CD4-positive, alpha-beta T cell (primary cell): ENCODE measurements at regions of chr14 and their contacts with region 1.

Region 1: GRCh38 chr14:102096214-102097114 is 9.6 kb upstream of the HSP90AA1 start:
- DNase-seq: peak; percentile 51 to 86 (median 66)
- ATAC-seq: peak; percentile 67
- H3K4me3 ChIP-seq: no peak overlapping the region
- H3K4me3 Mint-ChIP-seq: no peak overlapping the region
- H3K27ac ChIP-seq: no peak overlapping the region
- H3K27ac Mint-ChIP-seq: no peak overlapping the region
- H3K4me1 ChIP-seq: peaks cover 5% of the 10 kb centered on the region
- H3K4me1 Mint-ChIP-seq: no peaks in the 10 kb centered on the region
- H3K27me3 ChIP-seq: no peaks in the 10 kb centered on the region
- H3K27me3 Mint-ChIP-seq: no peaks in the 10 kb centered on the region
- CTCF ChIP-seq: peak; percentile 98

Region 2: GRCh38 chr14:101624536-101624935 is 471.9 kb before region 1 on chr14:
- CTCF ChIA-PET with region 1: no interaction called
- POLR2A ChIA-PET with region 1: no interaction called
- intact Hi-C with region 1: no loop called
- DNase-seq: peak in 1 of 14 experiments; percentile 7
- ATAC-seq: no peak
- H3K4me3 ChIP-seq: no peak overlapping the region
- H3K4me3 Mint-ChIP-seq: no peak overlapping the region
- H3K27ac ChIP-seq: no peak overlapping the region
- H3K27ac Mint-ChIP-seq: no peak overlapping the region
- H3K4me1 ChIP-seq: peaks cover 11% of the 10 kb centered on the region
- H3K4me1 Mint-ChIP-seq: peaks cover 9% of the 10 kb centered on the region
- H3K27me3 ChIP-seq: no peaks in the 10 kb centered on the region
- H3K27me3 Mint-ChIP-seq: no peaks in the 10 kb centered on the region
- CTCF ChIP-seq: no peak

Region 3: DNA sequence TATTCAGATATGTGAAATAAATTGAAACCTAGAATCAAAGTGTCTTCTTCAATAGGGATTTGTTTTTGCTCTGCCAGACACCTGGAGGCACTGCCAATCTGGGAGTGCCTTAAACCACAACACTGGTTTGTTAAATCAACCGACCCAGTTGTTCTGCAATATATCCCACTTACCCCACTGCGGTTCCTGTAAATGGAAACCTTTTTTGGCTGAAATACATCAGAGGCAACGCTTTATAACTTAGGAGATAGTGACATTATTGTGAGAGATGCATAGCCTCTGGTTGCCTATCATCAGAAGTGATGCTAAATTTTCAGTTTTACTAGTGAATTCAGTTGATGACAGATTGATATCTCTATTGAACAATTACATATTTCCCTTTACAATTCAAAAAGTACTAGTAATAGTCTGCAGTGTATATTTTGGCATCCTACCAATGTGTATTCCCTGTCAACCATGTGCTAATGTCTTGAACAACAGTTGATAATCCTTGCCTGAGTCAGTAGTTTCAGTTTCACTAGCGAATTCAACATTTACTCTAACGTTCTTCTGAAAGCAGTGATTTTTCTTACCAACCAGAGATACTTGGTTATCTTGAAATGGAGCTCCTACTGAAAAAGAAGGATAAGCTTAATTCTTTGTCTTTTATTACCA is 304.4 kb before region 1 on chr14:
- CTCF ChIA-PET with region 1: no interaction called
- POLR2A ChIA-PET with region 1: no interaction called
- intact Hi-C with region 1: no loop called
- DNase-seq: peak in 3 of 14 experiments; percentile 56 to 72 (median 64)
- ATAC-seq: peak; percentile 84
- H3K4me3 ChIP-seq: peak overlapping the region; percentile 40
- H3K4me3 Mint-ChIP-seq: peak overlapping the region; percentile 84
- H3K27ac ChIP-seq: peak overlapping the region in 1 of 2 donors; percentile 60
- H3K27ac Mint-ChIP-seq: peak overlapping the region; percentile 76
- H3K4me1 ChIP-seq: peaks cover 12% of the 10 kb centered on the region
- H3K4me1 Mint-ChIP-seq: peaks cover 36% of the 10 kb centered on the region
- H3K27me3 ChIP-seq: no peaks in the 10 kb centered on the region
- H3K27me3 Mint-ChIP-seq: no peaks in the 10 kb centered on the region
- CTCF ChIP-seq: no peak

Region 4: DNA sequence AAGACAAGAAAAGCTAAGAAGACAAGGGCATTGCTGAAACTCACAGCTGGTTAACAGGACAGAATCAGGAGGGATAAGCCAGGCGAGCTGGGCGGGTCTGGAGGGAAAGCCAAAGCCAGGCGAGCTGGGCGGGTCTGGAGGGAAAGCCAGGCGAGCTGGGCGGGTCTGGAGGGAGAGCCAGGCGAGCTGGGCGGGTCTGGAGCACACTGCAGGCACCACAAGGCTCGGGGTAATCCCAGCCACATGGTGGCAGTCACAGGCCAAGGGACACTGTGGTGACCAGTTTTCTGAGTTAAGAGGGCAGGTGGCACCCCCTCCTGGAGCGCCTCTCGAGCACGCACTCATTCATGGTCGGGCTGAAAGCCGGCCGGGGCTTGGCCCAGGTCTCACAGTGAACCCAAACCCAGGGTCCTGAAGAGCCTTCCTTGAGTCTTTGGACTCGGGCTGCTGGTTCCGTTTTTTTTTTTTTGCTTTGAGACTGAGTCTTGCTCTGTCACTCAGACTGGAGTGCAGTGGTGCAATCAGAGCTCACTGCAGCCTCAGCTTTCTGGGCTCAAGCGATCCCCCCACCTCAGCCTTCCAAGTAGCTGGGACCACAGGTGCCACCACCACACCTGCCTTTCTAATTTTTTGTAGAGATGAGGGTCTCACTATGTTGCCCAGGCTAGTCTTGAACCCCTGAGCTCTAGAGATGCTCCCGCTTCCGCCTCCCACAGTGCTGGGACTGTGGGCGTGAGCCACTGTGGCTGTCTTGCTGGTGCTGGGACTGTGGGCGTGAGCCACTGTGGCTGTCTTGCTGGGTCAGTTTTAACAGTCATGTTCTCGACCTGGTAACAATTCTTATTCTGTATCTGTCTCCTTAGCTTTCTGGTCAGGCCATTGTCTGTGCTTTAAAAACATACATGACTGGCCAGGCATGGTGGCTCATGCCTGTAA is 49.9 kb before region 1 on chr14:
- CTCF ChIA-PET with region 1: interaction called, 5 read pairs
- POLR2A ChIA-PET with region 1: no interaction called
- intact Hi-C with region 1: loop called in 1 of 2 experiments (anchors 5 kb)
- DNase-seq: peak in 5 of 14 experiments; percentile 12 to 50 (median 29)
- ATAC-seq: no peak
- H3K4me3 ChIP-seq: no peak overlapping the region
- H3K4me3 Mint-ChIP-seq: no peak overlapping the region
- H3K27ac ChIP-seq: no peak overlapping the region
- H3K27ac Mint-ChIP-seq: no peak overlapping the region
- H3K4me1 ChIP-seq: no peaks in the 10 kb centered on the region
- H3K4me1 Mint-ChIP-seq: no peaks in the 10 kb centered on the region
- H3K27me3 ChIP-seq: no peaks in the 10 kb centered on the region
- H3K27me3 Mint-ChIP-seq: no peaks in the 10 kb centered on the region
- CTCF ChIP-seq: no peak

Region 5: DNA sequence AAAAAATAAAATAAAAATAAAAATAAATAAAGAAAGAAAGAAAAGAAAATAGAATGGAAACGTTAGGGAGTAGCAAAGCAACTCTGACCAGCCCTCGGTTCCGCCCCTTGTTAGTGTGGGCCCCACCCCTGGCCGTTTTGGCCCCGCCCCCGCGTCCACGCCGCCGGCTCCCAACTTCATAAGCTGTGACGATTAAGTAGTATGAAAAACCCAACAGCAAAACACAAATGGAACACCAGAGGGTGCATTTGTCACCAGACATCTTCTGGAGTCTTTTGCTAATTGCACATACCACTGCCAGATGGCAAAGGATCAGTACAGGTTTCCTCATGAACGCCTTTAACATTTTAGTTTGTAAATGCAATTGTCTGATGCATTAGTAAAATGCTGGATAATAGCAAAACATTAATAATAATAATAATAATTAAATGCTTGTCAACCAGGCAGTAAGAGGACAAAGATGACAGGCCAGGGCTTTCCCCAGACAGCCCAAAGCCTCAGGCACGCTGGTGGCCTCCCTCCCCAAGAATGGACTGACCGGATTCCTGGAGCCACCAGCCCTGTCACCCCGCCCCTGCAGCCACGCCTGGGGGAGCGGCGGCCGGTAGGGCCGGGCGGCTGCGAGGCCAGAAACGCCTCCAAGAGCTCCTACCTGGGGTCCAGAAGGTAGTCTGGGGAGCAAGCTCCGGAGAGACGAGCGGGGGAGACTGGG is 33.2 kb before region 1 on chr14:
- CTCF ChIA-PET with region 1: interaction called, 28 read pairs
- POLR2A ChIA-PET with region 1: no interaction called
- intact Hi-C with region 1: loop called (anchors 1 kb)
- DNase-seq: peak; percentile 51 to 86 (median 62)
- ATAC-seq: peak; percentile 95
- H3K4me3 ChIP-seq: no peak overlapping the region
- H3K4me3 Mint-ChIP-seq: no peak overlapping the region
- H3K27ac ChIP-seq: no peak overlapping the region
- H3K27ac Mint-ChIP-seq: no peak overlapping the region
- H3K4me1 ChIP-seq: peaks cover 6% of the 10 kb centered on the region
- H3K4me1 Mint-ChIP-seq: peaks cover 4% of the 10 kb centered on the region
- H3K27me3 ChIP-seq: no peaks in the 10 kb centered on the region
- H3K27me3 Mint-ChIP-seq: no peaks in the 10 kb centered on the region
- CTCF ChIP-seq: peak; percentile 32

Region 6: DNA sequence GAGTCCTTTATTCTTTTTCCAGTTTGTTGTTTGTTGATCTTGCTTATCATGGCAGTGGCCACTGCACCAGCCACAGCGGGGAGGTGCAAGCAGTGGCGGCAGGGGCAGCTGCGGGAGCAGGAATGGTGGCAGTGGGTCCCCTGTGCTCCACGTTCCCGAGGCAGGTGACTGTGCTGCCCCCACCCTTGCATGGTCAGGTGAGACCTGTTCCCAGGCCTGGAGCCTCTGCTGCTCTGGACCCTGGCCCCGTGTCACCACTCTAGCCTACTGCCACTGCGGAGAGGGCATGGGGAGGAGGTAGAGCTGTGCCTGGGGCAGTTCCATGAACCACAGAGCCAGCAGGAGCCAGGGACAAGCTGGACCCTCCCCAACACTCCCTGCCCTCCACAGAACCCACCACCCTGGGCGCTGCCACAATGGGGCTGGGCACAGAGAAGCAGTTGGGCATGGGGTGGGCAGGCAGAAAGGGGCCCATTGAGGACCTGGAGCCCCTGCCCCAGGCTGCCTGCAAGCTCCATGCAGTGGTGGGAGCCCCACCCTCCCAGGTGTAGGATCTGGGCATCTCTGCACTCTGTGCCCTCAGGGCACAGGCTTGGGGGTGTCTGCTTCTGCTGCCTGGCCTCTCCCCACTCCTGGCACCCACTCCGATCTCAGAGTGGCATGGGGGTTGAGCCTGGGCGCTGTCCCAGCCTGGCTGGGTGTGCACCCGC is 20.1 kb after region 1 on chr14:
- CTCF ChIA-PET with region 1: no interaction called
- POLR2A ChIA-PET with region 1: no interaction called
- intact Hi-C with region 1: no loop called
- DNase-seq: no peak
- ATAC-seq: no peak
- H3K4me3 ChIP-seq: no peak overlapping the region
- H3K4me3 Mint-ChIP-seq: no peak overlapping the region
- H3K27ac ChIP-seq: no peak overlapping the region
- H3K27ac Mint-ChIP-seq: no peak overlapping the region
- H3K4me1 ChIP-seq: no peaks in the 10 kb centered on the region
- H3K4me1 Mint-ChIP-seq: no peaks in the 10 kb centered on the region
- H3K27me3 ChIP-seq: no peaks in the 10 kb centered on the region
- H3K27me3 Mint-ChIP-seq: no peaks in the 10 kb centered on the region
- CTCF ChIP-seq: no peak